Heart left ventricle (tissue), 16 donors: ENCODE measurements at regions of chr4 and their contacts with region 1.

Region 1: GRCh38 chr4:147994076-147994475 is 262.2 kb downstream of the ARHGAP10 start:
- DNase-seq: no peak
- ATAC-seq: no peak
- H3K4me3 ChIP-seq: no peak overlapping the region
- H3K27ac ChIP-seq: peak overlapping the region in 3 of 12 donors; percentile 2 to 42 (median 16)
- H3K4me1 ChIP-seq: peaks cover 0 to 53% (median 21%) of the 10 kb centered on the region in 12 donors
- H3K27me3 ChIP-seq: no peaks in the 10 kb centered on the region
- CTCF ChIP-seq: no peak
- POLR2A ChIP-seq: no peak

Region 2: DNA sequence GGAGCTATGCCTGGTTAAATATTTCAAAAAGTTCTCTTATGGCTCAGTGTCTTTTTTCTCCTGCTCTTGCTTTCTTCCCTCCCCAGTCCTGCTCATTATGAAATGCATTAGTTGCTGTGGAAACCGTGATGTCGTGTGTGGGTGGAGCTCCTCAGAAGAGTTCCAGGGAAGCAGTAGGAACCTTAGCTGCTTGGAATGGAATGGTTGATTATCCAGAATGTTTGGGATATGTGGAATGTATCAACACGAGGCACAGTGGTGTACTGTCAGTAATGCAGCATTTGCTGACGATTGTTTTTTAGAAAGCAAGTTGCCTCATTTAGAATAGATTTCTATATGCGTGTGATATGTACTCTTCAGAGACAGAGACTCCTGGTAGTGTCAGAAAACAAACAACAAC is 71.0 kb after region 1 on chr4:
- intact Hi-C with region 1: loop called in 1 of 10 experiments (anchors 10 kb)
- DNase-seq: no peak
- ATAC-seq: no peak
- H3K4me3 ChIP-seq: no peak overlapping the region
- H3K27ac ChIP-seq: no peak overlapping the region
- H3K4me1 ChIP-seq: peaks cover 0 to 72% (median 42%) of the 10 kb centered on the region in 12 donors
- H3K27me3 ChIP-seq: no peaks in the 10 kb centered on the region
- CTCF ChIP-seq: no peak
- POLR2A ChIP-seq: no peak

Region 3: GRCh38 chr4:148682549-148682948 is 688.5 kb after region 1 on chr4:
- intact Hi-C with region 1: no loop called
- DNase-seq: no peak
- ATAC-seq: no peak
- H3K4me3 ChIP-seq: no peak overlapping the region
- H3K27ac ChIP-seq: no peak overlapping the region
- H3K4me1 ChIP-seq: no peaks in the 10 kb centered on the region
- H3K27me3 ChIP-seq: no peaks in the 10 kb centered on the region
- CTCF ChIP-seq: no peak
- POLR2A ChIP-seq: no peak